ENCODE measurements at regions of chr3 and their contacts with region 1.

Region 1: GRCh38 chr3:94561094-94561493 is 498.2 kb downstream of the NSUN3 start:
- DNase-seq: no peak
- ATAC-seq: no peak
- H3K4me3 ChIP-seq: no peak overlapping the region
- H3K27ac ChIP-seq: no peak overlapping the region
- H3K4me1 ChIP-seq: no peaks in the 10 kb centered on the region
- H3K27me3 ChIP-seq: no peaks in the 10 kb centered on the region
- CTCF ChIP-seq: no peak
- POLR2A ChIP-seq: no peak

Region 2: GRCh38 chr3:94573337-94573736 is 12.2 kb after region 1 on chr3:
- in situ Hi-C with region 1: no loop called
- intact Hi-C with region 1: loop called (anchors 1 kb)
- DNase-seq: no peak
- ATAC-seq: no peak
- H3K4me3 ChIP-seq: no peak overlapping the region
- H3K27ac ChIP-seq: no peak overlapping the region
- H3K4me1 ChIP-seq: no peaks in the 10 kb centered on the region
- H3K27me3 ChIP-seq: no peaks in the 10 kb centered on the region
- CTCF ChIP-seq: no peak
- POLR2A ChIP-seq: no peak